PC-3 (cell line): ENCODE measurements at regions of chr14 and their contacts with region 1.

Region 1: DNA sequence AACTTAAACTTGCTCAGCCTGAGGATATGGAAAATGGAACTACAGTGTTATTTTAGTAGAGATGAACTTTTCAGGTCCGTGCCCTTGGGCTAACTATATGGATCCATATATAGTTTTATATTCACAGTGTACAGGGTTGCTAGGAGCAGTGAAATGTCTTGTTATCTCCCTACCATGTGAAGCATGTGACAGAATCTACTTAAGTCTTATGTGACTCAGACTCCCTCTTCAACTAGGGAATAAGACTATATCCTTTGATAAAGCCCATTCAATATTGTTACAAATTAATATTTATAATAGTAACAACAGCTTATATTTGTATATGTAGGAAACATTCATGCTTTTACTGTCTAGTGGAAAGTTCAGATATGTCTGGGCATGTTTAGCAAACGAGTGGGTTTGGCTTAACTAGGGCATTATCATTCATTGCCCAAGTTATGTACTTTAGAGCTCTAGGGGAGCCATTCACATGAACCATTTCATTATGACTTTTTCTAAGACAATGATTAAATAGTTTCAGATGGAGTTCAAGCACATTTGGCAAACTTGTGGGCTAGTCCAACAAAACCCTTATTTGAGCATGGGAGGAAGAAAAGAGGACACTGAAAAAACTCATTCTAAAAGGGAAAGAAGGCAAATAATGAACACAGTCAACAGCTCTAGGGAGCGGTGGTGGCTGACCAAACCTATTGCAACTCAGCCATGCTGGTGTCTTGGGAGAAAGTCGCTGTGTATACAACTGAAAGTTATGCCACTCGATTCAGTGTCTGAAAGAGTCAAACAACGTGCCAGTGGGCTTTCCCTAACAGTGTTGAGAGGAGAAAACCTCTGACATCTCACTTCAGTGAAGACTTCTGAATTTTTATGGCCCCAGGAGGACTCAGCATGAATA is 305.9 kb upstream of the G2E3 start:
- DNase-seq: no peak
- ATAC-seq: no peak
- H3K4me3 ChIP-seq: no peak overlapping the region
- H3K27ac ChIP-seq: no peak overlapping the region
- H3K4me1 ChIP-seq: peaks cover 4% of the 10 kb centered on the region; the same call in 1 of the 2 replicates
- H3K27me3 ChIP-seq: no peaks in the 10 kb centered on the region
- CTCF ChIP-seq: no peak

Region 2: GRCh38 chr14:30223385-30223813 is 29.6 kb before region 1 on chr14:
- CTCF ChIA-PET with region 1: no interaction called
- POLR2A ChIA-PET with region 1: no interaction called
- intact Hi-C with region 1: loop called (anchors 2 kb)
- DNase-seq: peak; percentile 99
- ATAC-seq: peak; percentile 93
- H3K4me3 ChIP-seq: 0 out of 2 replicates have a peak overlapping the region, but pooled peaks have one; percentile 7
- H3K27ac ChIP-seq: peak overlapping the region; percentile 47
- H3K4me1 ChIP-seq: peaks cover 47% of the 10 kb centered on the region
- H3K27me3 ChIP-seq: no peaks in the 10 kb centered on the region
- CTCF ChIP-seq: no peak